HCT116 (cell line): ENCODE measurements at regions of chr3 and their contacts with region 1.

Region 1: GRCh38 chr3:197029511-197030167 is at the start of gene MELTF:
- DNase-seq: no peak
- ATAC-seq: peak; percentile 80
- H3K4me3 ChIP-seq: peak within 1 kb of the TSS; percentile 78 to 88
- H3K27ac ChIP-seq: peak within 1 kb of the TSS; percentile 90
- H3K4me1 ChIP-seq: peaks cover 25 to 40% of the 10 kb centered on the region in 2 experiments
- H3K27me3 ChIP-seq: no peaks in the 10 kb centered on the region
- CTCF ChIP-seq: peak in 2 of 3 experiments; percentile 65 to 82; a peak in 4 of 6 replicates
- POLR2A ChIP-seq: no peak
- RAD21 ChIP-seq: no peak
- total RNA-seq, gene MELTF: 47.6 TPM

Region 2: GRCh38 chr3:197002701-197003454 is 26.8 kb before region 1 on chr3:
- CTCF ChIA-PET with region 1: no interaction called
- POLR2A ChIA-PET with region 1: interaction called, 3 read pairs
- RAD21 ChIA-PET with region 1: no interaction called
- intact Hi-C with region 1: loop called (anchors 2 kb)
- DNase-seq: peak; percentile 51
- ATAC-seq: peak; percentile 85
- H3K4me3 ChIP-seq: peak overlapping the region; percentile 47 to 54; a peak in 3 of 4 replicates
- H3K27ac ChIP-seq: peak overlapping the region; percentile 67
- H3K4me1 ChIP-seq: peaks cover 21 to 40% of the 10 kb centered on the region in 2 experiments; a peak in 3 of 4 replicates
- H3K27me3 ChIP-seq: no peaks in the 10 kb centered on the region
- CTCF ChIP-seq: peak; percentile 47 to 60 (median 47); a peak in 5 of 6 replicates
- POLR2A ChIP-seq: no peak
- RAD21 ChIP-seq: peak; percentile 49